PC-3 (cell line): ENCODE measurements at regions of chr2 and their contacts with region 1.

Region 1: DNA sequence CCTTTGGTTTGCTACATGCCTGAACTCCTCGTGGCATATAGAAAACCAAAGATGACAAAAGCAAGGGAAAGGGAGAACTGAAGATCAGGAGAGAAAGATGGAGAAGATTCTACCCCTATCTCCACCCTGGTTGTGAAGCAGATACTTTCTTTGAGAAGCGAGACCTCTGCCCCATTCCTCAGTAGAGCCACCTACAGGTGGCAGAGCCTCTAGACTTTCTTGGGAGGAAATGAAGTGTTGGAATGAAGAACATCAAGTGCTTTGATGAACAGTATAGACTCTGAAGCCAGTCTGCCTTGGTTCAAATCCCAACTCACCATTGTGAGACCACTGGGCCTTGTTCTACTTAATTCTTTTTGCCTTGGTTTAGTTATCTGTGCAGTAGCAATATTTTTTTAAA is 348.8 kb upstream of the ETAA1 start:
- DNase-seq: peak; percentile 12
- ATAC-seq: no peak
- H3K4me3 ChIP-seq: no peak overlapping the region
- H3K27ac ChIP-seq: no peak overlapping the region
- H3K4me1 ChIP-seq: peaks cover 13% of the 10 kb centered on the region
- H3K27me3 ChIP-seq: no peaks in the 10 kb centered on the region
- CTCF ChIP-seq: peak; percentile 41

Region 2: GRCh38 chr2:66862886-66863650 is 185.2 kb before region 1 on chr2:
- CTCF ChIA-PET with region 1: no interaction called
- POLR2A ChIA-PET with region 1: no interaction called
- intact Hi-C with region 1: no loop called
- DNase-seq: peak; percentile 48
- ATAC-seq: no peak
- H3K4me3 ChIP-seq: no peak overlapping the region
- H3K27ac ChIP-seq: 0 out of 2 replicates have a peak overlapping the region, but pooled peaks have one; percentile 7
- H3K4me1 ChIP-seq: peaks cover 11% of the 10 kb centered on the region
- H3K27me3 ChIP-seq: no peaks in the 10 kb centered on the region
- CTCF ChIP-seq: no peak

Region 3: DNA sequence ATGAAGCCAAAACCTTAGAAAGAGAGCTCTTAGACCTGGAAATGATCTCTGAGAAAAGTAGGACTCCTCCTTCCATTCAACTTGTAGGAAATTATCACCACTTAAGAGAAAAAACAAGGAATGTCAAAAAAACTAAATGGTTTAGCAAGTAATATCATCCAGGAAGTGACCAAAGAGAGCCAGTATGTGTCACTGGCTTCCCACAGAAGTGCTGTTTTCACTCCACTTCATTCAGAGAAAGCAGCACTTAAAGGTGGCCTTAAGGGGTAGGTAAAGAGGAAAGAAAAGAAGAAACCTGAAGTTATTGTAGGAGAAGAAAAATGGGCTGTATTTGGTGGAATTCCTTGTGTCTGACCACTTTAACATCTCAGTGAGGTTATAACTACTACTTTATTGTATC is 65.5 kb before region 1 on chr2:
- CTCF ChIA-PET with region 1: no interaction called
- POLR2A ChIA-PET with region 1: no interaction called
- intact Hi-C with region 1: no loop called
- DNase-seq: peak; percentile 13
- ATAC-seq: no peak
- H3K4me3 ChIP-seq: no peak overlapping the region
- H3K27ac ChIP-seq: no peak overlapping the region
- H3K4me1 ChIP-seq: peaks cover 3% of the 10 kb centered on the region; the same call in 1 of the 2 replicates
- H3K27me3 ChIP-seq: peaks cover 7% of the 10 kb centered on the region; the same call in 1 of the 2 replicates
- CTCF ChIP-seq: no peak

Region 4: DNA sequence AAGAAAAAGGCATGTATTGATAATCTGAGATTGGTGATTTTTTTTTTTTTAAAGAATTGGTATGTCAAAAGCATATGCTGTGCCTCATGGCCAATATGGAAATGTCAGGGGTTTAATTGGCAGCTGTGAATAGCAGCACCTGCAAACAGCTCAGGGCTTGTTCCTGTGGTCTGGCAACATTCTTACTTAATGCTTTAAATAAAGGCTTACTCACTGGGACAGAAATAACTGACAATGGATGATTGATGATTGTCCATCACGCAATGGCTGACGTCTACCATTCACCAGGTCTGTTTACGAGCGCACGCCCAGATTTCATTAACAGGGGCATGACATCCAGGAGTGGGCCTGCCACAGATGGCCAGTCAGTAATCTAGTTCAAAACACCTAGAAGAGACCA is 415.5 kb after region 1 on chr2:
- CTCF ChIA-PET with region 1: no interaction called
- POLR2A ChIA-PET with region 1: no interaction called
- intact Hi-C with region 1: loop called (anchors 5 kb)
- DNase-seq: peak; percentile 96
- ATAC-seq: peak; percentile 88
- H3K4me3 ChIP-seq: no peak overlapping the region
- H3K27ac ChIP-seq: peak overlapping the region; percentile 94
- H3K4me1 ChIP-seq: peaks cover 34% of the 10 kb centered on the region
- H3K27me3 ChIP-seq: no peaks in the 10 kb centered on the region
- CTCF ChIP-seq: no peak